ENCODE measurements at regions of chr16 and their contacts with region 1.

Region 1: DNA sequence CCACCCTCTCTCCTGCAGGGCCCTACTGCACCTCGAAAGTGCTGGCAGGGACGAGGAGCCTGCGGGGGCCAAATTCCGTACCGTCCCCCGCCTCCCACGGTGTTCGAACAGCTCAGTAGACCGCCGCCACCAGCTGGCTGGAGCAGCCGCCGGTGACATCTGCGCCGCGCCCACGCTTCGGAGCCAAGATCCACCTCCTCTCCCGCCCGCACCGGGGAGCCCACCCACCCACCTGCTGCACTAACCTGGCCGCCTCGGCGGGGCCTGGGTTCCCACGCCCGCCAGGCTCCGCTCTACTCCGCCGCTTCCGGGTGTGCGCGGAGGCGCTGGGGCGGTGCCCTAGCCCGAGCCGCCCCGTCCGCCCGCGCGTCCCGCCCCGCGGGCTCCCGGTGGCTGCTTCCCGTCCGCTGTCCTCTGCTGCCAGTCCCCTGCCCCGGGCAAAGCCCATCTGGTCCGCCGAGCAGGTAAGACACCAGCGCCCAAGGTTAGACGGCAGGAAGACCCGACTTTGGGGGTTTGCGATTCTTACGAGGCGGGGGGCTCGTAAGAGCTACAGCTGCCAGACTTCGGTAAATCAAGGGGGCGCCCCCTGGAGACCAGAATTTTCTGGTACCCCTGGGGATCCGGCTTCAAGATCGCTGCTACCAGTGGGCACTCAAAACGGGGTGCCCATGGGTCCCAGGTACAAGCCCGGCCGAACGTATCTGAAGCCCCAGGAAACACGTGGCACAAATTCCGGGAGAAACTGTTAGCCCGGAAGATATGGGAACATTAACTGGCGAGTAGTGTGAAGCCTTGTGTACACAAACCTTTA is at the starts of genes FBXL8 and TRADD:
- DNase-seq: peak; percentile 77 to 89
- H3K4me3 ChIP-seq: peak within 1 kb of the TSS; percentile 94
- H3K4me3 Mint-ChIP-seq: peak within 1 kb of the TSS; percentile 86
- H3K27ac Mint-ChIP-seq: peak within 1 kb of the TSS; percentile 82
- H3K4me1 ChIP-seq: peaks cover 6% of the 10 kb centered on the region; the same call in 1 of the 2 replicates
- H3K4me1 Mint-ChIP-seq: peaks cover 6% of the 10 kb centered on the region
- H3K27me3 ChIP-seq: no peaks in the 10 kb centered on the region
- H3K27me3 Mint-ChIP-seq: no peaks in the 10 kb centered on the region
- CTCF ChIP-seq: peak; percentile 67 to 70
- total RNA-seq, gene FBXL8: 27.6 and 31.5 TPM in 2 replicates
- total RNA-seq, gene TRADD: 16.8 and 18.3 TPM in 2 replicates

Region 2: DNA sequence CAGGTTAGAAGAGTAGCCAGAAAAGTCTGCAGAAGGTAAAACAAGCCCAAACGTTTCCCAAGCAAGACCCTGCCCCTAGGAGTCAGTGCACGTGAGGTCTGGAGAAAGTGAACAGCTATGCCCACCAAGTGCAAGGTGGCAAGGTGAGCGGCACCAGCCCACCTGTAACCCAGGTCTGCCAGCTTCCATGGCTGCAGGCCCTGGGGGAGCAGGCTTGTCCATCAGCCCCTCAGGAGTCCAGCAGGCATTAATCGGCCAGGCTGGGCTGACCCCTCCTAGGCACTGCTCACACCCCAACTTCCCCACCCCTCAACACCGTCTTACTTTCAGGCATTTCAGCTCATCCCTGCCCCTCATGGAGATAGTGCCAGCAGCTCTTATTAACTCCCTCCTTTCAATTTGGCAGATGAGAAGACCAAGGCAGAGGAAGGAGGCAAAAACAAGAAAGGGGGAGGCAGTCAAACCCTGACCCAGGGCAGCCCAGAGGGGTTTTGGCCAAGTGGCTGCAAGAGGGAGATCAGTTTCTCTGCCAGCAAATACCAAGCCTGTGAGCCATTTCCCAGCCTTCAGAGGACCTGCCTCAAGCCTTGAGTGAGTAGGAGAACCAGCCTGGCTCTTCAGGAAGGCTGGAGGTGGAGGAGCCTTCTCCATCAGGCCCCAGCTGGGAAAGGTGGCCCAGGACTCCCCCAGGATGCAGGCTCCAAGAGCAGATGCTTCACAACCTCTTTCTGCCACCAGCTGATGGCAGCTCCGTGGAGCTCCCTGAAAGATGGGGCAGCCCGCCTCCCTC is 718.0 kb before region 1 on chr16:
- CTCF ChIA-PET with region 1: no interaction called
- POLR2A ChIA-PET with region 1: no interaction called
- intact Hi-C with region 1: no loop called
- DNase-seq: no peak
- H3K4me3 ChIP-seq: no peak overlapping the region
- H3K4me3 Mint-ChIP-seq: no peak overlapping the region
- H3K27ac Mint-ChIP-seq: no peak overlapping the region
- H3K4me1 ChIP-seq: no peaks in the 10 kb centered on the region
- H3K4me1 Mint-ChIP-seq: no peaks in the 10 kb centered on the region
- H3K27me3 ChIP-seq: no peaks in the 10 kb centered on the region
- H3K27me3 Mint-ChIP-seq: peaks cover 19% of the 10 kb centered on the region
- CTCF ChIP-seq: no peak

Region 3: DNA sequence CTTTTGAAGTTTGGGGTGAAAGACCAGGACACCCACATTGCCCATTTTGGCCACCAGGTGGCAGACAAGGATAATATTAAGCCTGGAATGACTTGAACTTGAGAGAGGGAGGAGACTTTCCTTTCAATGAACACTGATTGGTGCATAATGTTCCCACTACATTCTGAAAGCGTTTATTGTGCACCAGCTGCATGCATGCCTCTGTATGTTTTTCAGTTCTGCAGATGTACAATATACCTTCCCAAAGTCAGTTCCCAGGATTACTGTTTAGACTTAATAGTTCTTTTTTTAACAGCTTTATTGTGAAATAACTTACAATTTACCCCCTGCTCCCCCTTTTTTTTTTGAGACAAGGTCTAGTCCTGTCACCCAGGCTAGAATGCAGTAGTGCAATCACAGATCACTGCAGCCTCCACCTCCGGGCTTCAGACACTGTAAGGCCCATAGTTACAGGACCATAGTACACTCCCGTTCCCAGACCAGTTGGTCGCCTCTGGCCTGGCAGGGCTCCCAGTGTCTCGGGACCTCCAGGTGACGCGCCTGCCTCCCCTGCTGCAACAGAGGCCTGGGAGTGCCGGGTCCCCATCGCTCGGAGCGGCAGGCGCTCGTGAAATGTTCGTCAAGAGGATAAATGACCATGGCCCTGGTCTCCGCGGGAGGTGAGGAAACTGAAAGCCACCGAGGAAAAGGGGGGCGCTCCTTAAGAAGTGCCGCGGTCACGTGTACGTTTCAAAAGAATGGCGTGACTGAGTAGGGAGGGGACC is 212.3 kb before region 1 on chr16:
- CTCF ChIA-PET with region 1: no interaction called
- POLR2A ChIA-PET with region 1: interaction called, 3 read pairs
- intact Hi-C with region 1: loop called (anchors 2 kb)
- DNase-seq: peak; percentile 81 to 87
- H3K4me3 ChIP-seq: no peak overlapping the region
- H3K4me3 Mint-ChIP-seq: peak overlapping the region; percentile 40
- H3K27ac Mint-ChIP-seq: peak overlapping the region; percentile 48
- H3K4me1 ChIP-seq: no peaks in the 10 kb centered on the region
- H3K4me1 Mint-ChIP-seq: no peaks in the 10 kb centered on the region
- H3K27me3 ChIP-seq: no peaks in the 10 kb centered on the region
- H3K27me3 Mint-ChIP-seq: no peaks in the 10 kb centered on the region
- CTCF ChIP-seq: peak; percentile 82 to 87

Region 4: DNA sequence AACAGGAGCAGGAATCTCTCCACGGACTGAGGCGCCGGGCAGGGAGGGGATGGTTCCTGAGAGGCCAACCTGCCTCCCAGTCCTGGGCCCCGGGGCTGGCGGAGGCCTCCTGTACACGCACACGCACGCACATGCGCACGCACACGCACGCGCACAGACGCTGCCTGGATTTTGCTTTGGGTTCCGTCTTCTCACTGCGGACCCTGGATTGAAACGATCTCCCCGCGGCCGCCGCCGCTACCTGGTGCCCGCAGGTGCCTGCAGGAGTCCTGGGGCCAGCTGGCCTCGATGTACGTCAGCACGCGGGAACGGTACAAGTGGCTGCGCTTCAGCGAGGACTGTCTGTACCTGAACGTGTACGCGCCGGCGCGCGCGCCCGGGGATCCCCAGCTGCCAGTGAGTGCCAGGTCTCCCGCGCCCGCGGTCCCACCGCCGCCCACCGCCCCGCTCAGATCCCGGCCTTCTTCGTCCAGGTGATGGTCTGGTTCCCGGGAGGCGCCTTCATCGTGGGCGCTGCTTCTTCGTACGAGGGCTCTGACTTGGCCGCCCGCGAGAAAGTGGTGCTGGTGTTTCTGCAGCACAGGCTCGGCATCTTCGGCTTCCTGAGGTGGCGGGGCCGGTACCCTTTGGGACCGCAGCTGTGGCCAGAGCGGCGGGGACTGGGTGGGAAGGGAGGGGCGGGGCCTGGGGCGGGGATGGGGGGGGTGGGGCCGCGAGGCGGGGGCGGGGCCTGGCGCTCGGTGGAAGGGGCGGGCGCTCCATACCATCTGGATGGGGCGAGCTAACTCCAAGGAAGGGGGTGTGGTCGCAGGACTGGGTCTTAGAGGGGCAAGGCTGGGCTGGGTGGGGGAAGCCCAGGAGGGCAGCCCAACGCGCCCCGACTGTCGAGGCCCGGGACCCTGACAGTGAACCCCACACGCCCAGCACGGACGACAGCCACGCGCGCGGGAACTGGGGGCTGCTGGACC is 159.1 kb before region 1 on chr16:
- CTCF ChIA-PET with region 1: no interaction called
- POLR2A ChIA-PET with region 1: no interaction called
- intact Hi-C with region 1: no loop called
- DNase-seq: peak in 1 of 2 experiments; percentile 38
- H3K4me3 ChIP-seq: peak overlapping the region; percentile 34
- H3K4me3 Mint-ChIP-seq: peak overlapping the region; percentile 58
- H3K27ac Mint-ChIP-seq: no peak overlapping the region
- H3K4me1 ChIP-seq: peaks cover 11% of the 10 kb centered on the region; the same call in 1 of the 2 replicates
- H3K4me1 Mint-ChIP-seq: no peaks in the 10 kb centered on the region
- H3K27me3 ChIP-seq: no peaks in the 10 kb centered on the region
- H3K27me3 Mint-ChIP-seq: peaks cover 6% of the 10 kb centered on the region
- CTCF ChIP-seq: no peak

Region 5: GRCh38 chr16:67173808-67174705 is 14.3 kb after region 1 on chr16:
- CTCF ChIA-PET with region 1: interaction called, 43 read pairs
- POLR2A ChIA-PET with region 1: interaction called, 13 read pairs
- intact Hi-C with region 1: loop called (anchors 1 kb)
- DNase-seq: peak; percentile 82 to 86
- H3K4me3 ChIP-seq: peak overlapping the region; percentile 41
- H3K4me3 Mint-ChIP-seq: peak overlapping the region; percentile 78
- H3K27ac Mint-ChIP-seq: peak overlapping the region; percentile 53
- H3K4me1 ChIP-seq: peaks cover 36% of the 10 kb centered on the region
- H3K4me1 Mint-ChIP-seq: peaks cover 42% of the 10 kb centered on the region
- H3K27me3 ChIP-seq: no peaks in the 10 kb centered on the region
- H3K27me3 Mint-ChIP-seq: no peaks in the 10 kb centered on the region
- CTCF ChIP-seq: peak in 1 of 2 experiments; percentile 50

Region 6: DNA sequence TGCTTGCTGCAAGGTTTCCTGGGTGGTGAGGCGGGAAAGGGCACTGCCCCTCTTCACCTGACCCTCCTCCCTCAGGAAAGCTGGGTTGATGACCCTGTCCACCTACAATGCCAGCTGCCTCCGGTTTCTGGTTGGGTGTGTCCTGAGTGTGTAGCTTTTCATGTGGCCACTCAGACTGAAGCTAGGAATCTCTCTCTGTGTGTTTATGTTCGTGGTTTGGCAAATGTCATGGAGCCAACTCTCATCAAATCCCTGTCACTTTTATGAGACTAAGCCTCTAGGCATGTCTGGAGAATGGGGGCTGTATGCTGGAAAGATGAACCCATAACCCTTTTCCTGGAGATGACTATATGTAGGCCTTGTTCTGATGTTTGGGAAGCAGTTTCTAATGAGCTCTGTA is 136.6 kb after region 1 on chr16:
- CTCF ChIA-PET with region 1: no interaction called
- POLR2A ChIA-PET with region 1: no interaction called
- intact Hi-C with region 1: no loop called
- DNase-seq: no peak
- H3K4me3 ChIP-seq: no peak overlapping the region
- H3K4me3 Mint-ChIP-seq: no peak overlapping the region
- H3K27ac Mint-ChIP-seq: no peak overlapping the region
- H3K4me1 ChIP-seq: 0 out of 2 replicates have a peak, but pooled peaks cover under 1% of the 10 kb centered on the region
- H3K4me1 Mint-ChIP-seq: peaks cover 6% of the 10 kb centered on the region
- H3K27me3 ChIP-seq: no peaks in the 10 kb centered on the region
- H3K27me3 Mint-ChIP-seq: no peaks in the 10 kb centered on the region
- CTCF ChIP-seq: no peak

Region 7: GRCh38 chr16:67326472-67327309 is 166.9 kb after region 1 on chr16 and contains the starts of genes KCTD19 and LRRC36:
- CTCF ChIA-PET with region 1: no interaction called
- POLR2A ChIA-PET with region 1: no interaction called
- intact Hi-C with region 1: no loop called
- DNase-seq: peak; percentile 62 to 72
- H3K4me3 ChIP-seq: peak within 1 kb of the TSS; percentile 35
- H3K4me3 Mint-ChIP-seq: peak within 1 kb of the TSS; percentile 60
- H3K27ac Mint-ChIP-seq: no peak within 1 kb of the TSS
- H3K4me1 ChIP-seq: peaks cover 22% of the 10 kb centered on the region
- H3K4me1 Mint-ChIP-seq: peaks cover 13% of the 10 kb centered on the region
- H3K27me3 ChIP-seq: no peaks in the 10 kb centered on the region
- H3K27me3 Mint-ChIP-seq: peaks cover 5% of the 10 kb centered on the region
- CTCF ChIP-seq: peak in 1 of 2 experiments; percentile 27
- total RNA-seq, gene KCTD19: not detected in 2 replicates
- total RNA-seq, gene LRRC36: 0.79 TPM in 1 of 2 replicates, not detected in the other

Measured in Caco-2 (cell line).